ENCODE measurements at regions of chr6 and their contacts with region 1.

Region 1: DNA sequence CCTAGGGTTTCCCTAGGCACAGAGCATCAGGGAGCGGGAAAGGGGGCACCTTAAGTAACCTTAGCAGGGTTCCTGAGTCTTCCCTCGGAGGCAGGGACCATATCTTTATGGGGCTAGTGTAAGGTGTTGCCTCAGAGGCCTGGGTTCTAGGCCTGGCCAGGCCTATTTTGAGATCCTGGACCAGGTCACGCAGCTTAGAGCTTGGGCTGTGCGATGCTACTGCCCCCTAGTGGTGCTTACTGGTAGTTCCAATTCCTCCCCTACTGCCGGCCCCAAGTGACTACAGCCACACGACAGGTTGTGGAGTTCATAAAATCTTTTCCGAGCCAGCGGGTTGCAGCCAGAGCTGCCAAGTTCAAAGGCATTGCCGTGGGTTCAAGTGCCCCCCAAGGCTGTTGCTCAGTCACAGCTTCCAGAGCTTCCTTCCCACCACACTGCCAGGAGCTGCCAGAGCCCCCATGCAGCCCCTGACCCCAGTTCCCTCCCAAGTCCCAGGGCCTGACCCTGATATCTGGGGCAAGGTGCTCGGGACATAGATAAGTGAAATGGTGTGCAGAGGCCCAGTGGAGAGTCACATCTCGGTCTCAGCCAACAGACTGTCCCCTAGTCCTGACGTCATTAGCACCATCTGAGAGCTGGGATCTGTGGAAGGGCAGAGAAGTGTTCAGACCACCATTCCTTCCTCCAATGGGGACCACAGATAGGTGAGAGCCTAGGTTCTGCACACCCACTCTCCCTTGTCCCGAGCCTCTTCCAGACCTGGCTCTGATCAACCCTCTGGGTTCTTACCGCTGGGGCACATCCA is 3.3 kb downstream of the LRRC73 start:
- DNase-seq: peak; percentile 62
- H3K4me3 ChIP-seq: no peak overlapping the region
- H3K27ac ChIP-seq: no peak overlapping the region
- H3K4me1 ChIP-seq: peaks cover 12% of the 10 kb centered on the region
- H3K27me3 ChIP-seq: no peaks in the 10 kb centered on the region
- CTCF ChIP-seq: peak; percentile 91 to 92

Region 2: GRCh38 chr6:43149265-43149664 is 357.6 kb before region 1 on chr6:
- CTCF ChIA-PET with region 1: no interaction called
- dilution Hi-C with region 1: loop called (anchors 5 kb)
- in situ Hi-C with region 1: no loop called
- intact Hi-C with region 1: no loop called
- DNase-seq: no peak
- H3K4me3 ChIP-seq: no peak overlapping the region
- H3K27ac ChIP-seq: no peak overlapping the region
- H3K4me1 ChIP-seq: peaks cover 13% of the 10 kb centered on the region
- H3K27me3 ChIP-seq: no peaks in the 10 kb centered on the region
- CTCF ChIP-seq: no peak

Region 3: GRCh38 chr6:43310624-43311023 is 196.2 kb before region 1 on chr6:
- CTCF ChIA-PET with region 1: interaction called, 3 read pairs
- dilution Hi-C with region 1: loop called (anchors 5 kb)
- in situ Hi-C with region 1: no loop called
- intact Hi-C with region 1: no loop called
- DNase-seq: no peak
- H3K4me3 ChIP-seq: no peak overlapping the region
- H3K27ac ChIP-seq: no peak overlapping the region
- H3K4me1 ChIP-seq: peaks cover 12% of the 10 kb centered on the region
- H3K27me3 ChIP-seq: no peaks in the 10 kb centered on the region
- CTCF ChIP-seq: no peak

Region 4: DNA sequence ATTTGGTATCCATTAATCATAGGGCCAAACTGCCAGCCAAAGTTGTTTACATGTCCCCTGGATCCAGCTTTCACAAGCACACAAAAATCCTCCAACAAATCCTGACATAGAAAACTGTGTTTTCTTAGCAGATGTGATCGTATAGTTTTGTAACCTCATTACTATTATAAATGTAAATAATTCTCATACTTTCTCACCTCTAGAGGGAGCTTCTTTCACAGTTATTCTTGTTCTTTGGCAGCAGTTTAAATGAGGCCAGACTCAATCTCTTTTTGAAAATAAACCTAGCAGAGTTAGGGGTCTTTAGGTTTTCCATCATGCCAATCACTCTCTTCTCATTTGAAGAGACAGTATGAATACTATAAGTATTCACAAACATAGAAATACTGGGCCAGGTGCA is 120.4 kb before region 1 on chr6:
- CTCF ChIA-PET with region 1: no interaction called
- dilution Hi-C with region 1: loop called (anchors 5 kb)
- in situ Hi-C with region 1: no loop called
- intact Hi-C with region 1: no loop called
- DNase-seq: no peak
- H3K4me3 ChIP-seq: no peak overlapping the region
- H3K27ac ChIP-seq: no peak overlapping the region
- H3K4me1 ChIP-seq: peaks cover 12% of the 10 kb centered on the region
- H3K27me3 ChIP-seq: no peaks in the 10 kb centered on the region
- CTCF ChIP-seq: peak in 1 of 2 donors; percentile 16

Region 5: GRCh38 chr6:43454696-43455530 is 52.0 kb before region 1 on chr6:
- CTCF ChIA-PET with region 1: no interaction called
- dilution Hi-C with region 1: no loop called
- in situ Hi-C with region 1: no loop called
- intact Hi-C with region 1: loop called (anchors 1 kb)
- DNase-seq: no peak
- H3K4me3 ChIP-seq: peak overlapping the region; percentile 53 to 74 (median 62)
- H3K27ac ChIP-seq: no peak overlapping the region
- H3K4me1 ChIP-seq: peaks cover 13% of the 10 kb centered on the region
- H3K27me3 ChIP-seq: no peaks in the 10 kb centered on the region
- CTCF ChIP-seq: no peak

Measured in mammary epithelial cell (primary cell).